ENCODE measurements at regions of chr13 and their contacts with region 1.

Region 1: DNA sequence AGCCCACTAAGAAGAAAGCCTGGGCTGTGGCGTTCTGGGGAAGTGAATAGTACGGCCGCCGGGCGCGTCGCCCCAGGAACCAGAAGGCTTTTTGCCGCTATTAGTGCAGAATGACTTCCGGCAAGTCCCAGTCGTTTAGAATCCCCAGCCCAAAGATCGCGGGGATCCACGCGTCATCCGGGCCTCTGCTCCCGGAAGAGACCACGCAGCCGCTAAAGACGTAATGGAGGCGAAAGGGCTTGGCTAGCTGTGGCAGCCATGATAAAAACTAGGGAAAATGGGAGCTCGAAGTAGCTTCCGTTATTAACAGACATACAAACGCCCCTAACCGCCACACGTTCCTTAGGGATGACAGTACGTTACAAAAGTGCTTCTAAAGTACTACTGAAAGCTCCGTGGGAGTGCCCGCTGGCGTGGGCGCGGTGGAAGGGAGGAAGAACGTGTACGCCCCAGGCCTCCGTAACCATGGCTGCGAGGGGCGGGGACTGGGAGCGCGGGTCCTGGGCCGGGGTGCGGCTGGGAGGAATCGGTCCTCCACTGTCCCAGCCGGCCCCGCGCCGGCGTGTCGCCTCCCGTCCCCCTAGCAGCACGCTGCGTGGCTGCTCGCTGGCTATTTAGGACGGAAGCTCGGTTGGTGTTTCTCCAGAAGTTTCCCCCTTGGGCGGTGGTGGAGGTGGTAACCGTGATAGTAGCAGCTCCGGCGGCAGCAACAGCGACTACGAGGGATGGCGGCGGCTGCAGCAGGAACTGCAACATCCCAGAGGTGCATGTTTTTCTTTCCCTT is at the start of gene SUGT1:
- DNase-seq: peak; percentile 96
- ATAC-seq: peak; percentile 94
- H3K4me3 Mint-ChIP-seq: no peak within 1 kb of the TSS
- H3K27ac Mint-ChIP-seq: no peak within 1 kb of the TSS
- H3K4me1 Mint-ChIP-seq: peaks cover 11% of the 10 kb centered on the region
- H3K27me3 Mint-ChIP-seq: no peaks in the 10 kb centered on the region
- CTCF ChIP-seq: no peak
- total RNA-seq, gene SUGT1: 38.6 and 38.7 TPM in 2 replicates

Region 2: DNA sequence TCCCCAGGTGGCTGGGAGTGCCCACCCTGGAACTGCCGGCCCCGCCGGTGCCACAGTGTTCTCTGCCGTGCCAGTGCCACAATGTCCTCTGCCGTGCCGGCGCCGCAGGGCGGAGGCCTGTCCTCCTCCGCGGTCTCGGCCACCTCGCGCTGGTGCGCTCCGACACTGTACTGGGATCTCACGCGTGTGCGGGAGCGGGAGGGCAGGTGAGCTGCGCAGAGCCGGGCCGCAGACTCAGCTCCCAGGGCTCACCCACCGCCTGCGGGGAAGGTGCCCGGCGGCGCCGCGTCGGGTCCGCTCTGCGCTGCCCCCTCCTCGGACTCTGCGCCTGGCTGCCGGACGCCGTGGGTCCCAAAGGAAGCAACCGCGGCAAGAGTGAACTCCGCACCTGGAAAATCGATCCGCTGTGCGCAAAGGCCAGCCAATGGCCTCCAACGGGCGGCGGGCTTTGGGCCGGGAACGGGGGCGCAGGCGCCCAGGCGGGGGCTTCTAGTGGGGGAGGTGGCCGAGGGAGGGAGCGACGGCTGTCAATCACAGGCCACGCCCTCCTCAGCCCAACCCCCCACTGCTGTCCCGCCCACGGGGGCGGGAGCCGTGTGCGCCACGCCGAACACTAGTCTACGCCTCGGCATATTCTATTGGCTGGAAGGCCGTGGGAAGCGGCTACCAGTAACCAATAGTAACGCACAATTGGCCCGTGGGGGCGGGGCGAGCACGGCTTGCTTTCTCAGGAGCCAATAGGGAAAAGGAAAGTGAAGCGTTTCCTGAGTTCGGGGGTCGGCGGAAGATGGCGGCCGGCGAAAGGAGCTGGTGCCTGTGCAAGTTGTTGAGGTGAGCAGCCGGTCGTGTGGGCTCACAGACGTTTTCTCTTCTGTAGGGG is 640.5 kb before region 1 on chr13 and contains the start of gene ALG11:
- CTCF ChIA-PET with region 1: no interaction called
- POLR2A ChIA-PET with region 1: no interaction called
- intact Hi-C with region 1: loop called (anchors 1 kb)
- DNase-seq: peak; percentile 98
- ATAC-seq: peak; percentile 99
- H3K4me3 Mint-ChIP-seq: peak within 1 kb of the TSS; percentile 99
- H3K27ac Mint-ChIP-seq: peak within 1 kb of the TSS; percentile 89
- H3K4me1 Mint-ChIP-seq: peaks cover 19% of the 10 kb centered on the region
- H3K27me3 Mint-ChIP-seq: peaks cover 16% of the 10 kb centered on the region
- CTCF ChIP-seq: no peak
- total RNA-seq, gene ALG11: 31.8 and 36.9 TPM in 2 replicates

Region 3: GRCh38 chr13:52194184-52194868 is 458.1 kb before region 1 on chr13:
- CTCF ChIA-PET with region 1: no interaction called
- POLR2A ChIA-PET with region 1: interaction called, 9 read pairs
- intact Hi-C with region 1: loop called (anchors 1 kb)
- DNase-seq: peak; percentile 90
- ATAC-seq: peak; percentile 86
- H3K4me3 Mint-ChIP-seq: peak overlapping the region; percentile 99
- H3K27ac Mint-ChIP-seq: peak overlapping the region; percentile 98
- H3K4me1 Mint-ChIP-seq: peaks cover 31% of the 10 kb centered on the region
- H3K27me3 Mint-ChIP-seq: no peaks in the 10 kb centered on the region
- CTCF ChIP-seq: no peak

Region 4: DNA sequence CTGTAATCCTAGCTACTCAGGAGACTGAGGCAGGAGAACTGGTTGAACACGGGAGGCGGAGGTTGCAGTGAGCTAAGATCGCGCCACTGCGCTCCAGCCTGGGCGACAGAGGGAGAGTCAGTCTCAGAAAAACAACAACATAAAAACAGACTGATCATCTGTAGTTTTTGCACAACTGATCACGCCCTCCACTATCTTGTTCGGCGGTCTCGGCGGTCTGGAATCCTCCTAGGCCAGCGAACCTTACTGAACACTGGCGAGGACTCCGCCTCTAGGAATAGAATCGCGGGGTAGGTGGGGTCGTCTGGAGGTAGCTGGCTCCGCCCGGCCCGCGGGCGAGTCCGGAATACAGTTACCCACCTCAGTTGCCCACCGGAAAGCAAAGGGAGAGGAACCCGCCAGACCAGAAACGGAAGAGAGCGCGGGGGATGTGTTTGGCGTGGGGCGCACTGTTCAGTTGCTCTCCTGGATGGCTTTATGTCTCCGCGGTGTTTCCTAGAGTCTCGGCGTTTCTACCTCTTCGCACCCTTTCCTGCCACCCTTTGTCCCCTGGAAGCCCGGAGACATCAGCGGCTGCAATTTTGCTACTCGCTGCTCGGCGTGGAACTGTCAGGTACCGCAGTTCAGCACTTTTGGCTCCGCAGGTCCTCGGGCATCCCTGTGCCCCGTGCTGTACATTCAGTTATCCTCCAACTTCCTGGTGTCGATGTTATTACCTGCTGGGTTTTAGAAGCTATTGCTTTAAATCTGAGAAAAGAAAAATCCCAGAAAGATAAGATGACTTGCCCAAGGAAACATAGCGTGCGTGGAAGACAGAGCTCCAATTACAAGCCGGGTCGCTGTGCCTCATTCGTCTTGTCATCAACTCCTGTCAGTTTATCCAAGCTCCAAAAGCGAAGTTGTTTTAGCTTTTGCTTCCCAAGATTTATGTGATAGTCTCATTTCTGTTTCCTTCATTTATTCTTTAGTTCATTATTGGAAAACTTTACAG is 35.0 kb before region 1 on chr13:
- CTCF ChIA-PET with region 1: interaction called, 17 read pairs
- POLR2A ChIA-PET with region 1: interaction called, 98 read pairs
- intact Hi-C with region 1: loop called (anchors 1 kb)
- DNase-seq: peak; percentile 78
- ATAC-seq: peak; percentile 98
- H3K4me3 Mint-ChIP-seq: peak overlapping the region; percentile 100
- H3K27ac Mint-ChIP-seq: peak overlapping the region; percentile 96
- H3K4me1 Mint-ChIP-seq: peaks cover 34% of the 10 kb centered on the region
- H3K27me3 Mint-ChIP-seq: peaks cover under 1% of the 10 kb centered on the region
- CTCF ChIP-seq: no peak

Region 5: DNA sequence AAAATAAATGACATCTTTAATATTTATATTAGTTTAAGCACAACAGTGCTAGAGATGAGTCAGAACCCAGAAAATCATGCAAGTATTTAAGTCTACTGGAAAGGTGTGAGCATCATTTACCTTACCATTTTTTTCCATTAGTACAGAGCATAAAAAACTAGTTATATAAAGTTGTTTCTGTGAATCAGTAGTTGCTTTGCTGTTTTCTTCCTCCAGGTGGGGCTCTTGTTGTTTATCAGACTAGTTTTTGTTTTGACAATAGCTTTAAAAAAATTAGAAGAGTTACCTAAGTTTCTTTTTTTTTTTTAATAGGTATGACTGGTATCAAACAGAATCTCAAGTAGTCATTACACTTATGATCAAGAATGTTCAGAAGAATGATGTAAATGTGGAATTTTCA is 12.9 kb after region 1 on chr13:
- CTCF ChIA-PET with region 1: interaction called, 14 read pairs
- POLR2A ChIA-PET with region 1: interaction called, 9 read pairs
- intact Hi-C with region 1: loop called (anchors 1 kb)
- DNase-seq: no peak
- ATAC-seq: no peak
- H3K4me3 Mint-ChIP-seq: no peak overlapping the region
- H3K27ac Mint-ChIP-seq: no peak overlapping the region
- H3K4me1 Mint-ChIP-seq: no peaks in the 10 kb centered on the region
- H3K27me3 Mint-ChIP-seq: no peaks in the 10 kb centered on the region
- CTCF ChIP-seq: no peak

Region 6: DNA sequence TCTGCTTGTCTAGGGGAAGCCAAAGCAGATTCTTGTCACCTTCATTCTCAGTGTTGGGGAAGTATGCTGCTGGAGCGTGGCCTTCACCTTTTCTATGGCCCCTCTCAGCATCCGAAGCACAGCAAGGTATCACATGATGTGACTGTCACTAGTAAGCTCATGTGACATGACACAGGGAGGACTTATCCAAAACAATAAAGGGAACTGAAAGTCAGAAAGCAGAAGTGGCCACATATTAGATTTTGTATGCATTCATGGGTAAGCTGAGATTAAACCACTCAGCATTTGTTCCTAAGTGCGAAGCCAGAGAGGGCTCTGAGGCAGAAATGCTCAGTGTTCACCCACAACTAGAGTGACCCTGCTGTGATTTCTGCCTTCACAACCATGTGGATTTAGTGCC is 268.8 kb after region 1 on chr13:
- CTCF ChIA-PET with region 1: no interaction called
- POLR2A ChIA-PET with region 1: no interaction called
- intact Hi-C with region 1: loop called (anchors 1 kb)
- DNase-seq: no peak
- ATAC-seq: peak; percentile 92
- H3K4me3 Mint-ChIP-seq: no peak overlapping the region
- H3K27ac Mint-ChIP-seq: peak overlapping the region; percentile 75
- H3K4me1 Mint-ChIP-seq: peaks cover 15% of the 10 kb centered on the region
- H3K27me3 Mint-ChIP-seq: peaks cover 5% of the 10 kb centered on the region
- CTCF ChIP-seq: no peak